Activated CD4-positive, alpha-beta T cell treated with anti-CD3 and anti-CD28 coated beads for 36 hours (primary cell): ENCODE measurements at regions of chr14 and their contacts with region 1.

Region 1: DNA sequence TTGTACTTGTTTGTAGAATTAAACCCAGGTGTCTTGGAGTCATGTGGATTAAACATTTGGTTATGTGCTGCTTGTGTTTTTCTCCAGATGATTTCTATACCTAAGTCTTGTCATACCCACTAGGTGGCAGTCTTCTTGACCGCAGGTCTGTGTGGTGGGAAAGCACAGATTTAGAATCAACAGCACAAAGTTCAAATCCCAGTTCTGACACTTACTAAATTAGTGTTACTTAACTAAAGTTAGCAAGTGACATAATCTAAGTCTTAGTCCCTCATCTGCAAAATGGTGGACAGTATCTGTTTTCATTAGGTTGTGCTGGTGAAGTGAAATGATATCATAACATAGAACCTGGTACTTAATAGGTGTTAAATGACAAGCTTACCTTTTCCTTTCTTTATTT is 151.0 kb upstream of the ARHGAP5 start:
- DNase-seq: peak; percentile 49
- ATAC-seq: no peak
- H3K4me3 Mint-ChIP-seq: no peak overlapping the region
- H3K27ac Mint-ChIP-seq: no peak overlapping the region
- H3K4me1 Mint-ChIP-seq: peaks cover 13% of the 10 kb centered on the region
- H3K27me3 Mint-ChIP-seq: no peaks in the 10 kb centered on the region

Region 2: DNA sequence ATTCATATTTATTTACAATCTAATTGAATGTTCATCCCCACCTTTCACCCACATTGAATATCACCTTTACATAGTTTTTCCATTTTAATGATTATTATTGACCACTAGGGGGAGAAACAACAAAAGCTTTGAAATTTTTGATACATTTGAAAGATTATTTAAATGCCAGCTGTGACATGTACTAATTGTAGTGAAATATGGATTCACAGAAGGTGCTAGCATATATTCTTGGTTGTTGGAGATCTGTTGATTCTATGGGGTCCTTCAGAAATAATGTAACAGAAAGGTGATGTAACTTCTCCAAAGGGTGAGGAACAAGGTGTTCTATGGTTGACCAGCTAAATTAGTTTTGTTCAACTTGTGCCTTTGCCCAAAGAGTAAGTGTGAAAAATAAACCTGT is 415.9 kb before region 1 on chr14:
- CTCF ChIA-PET with region 1: interaction called, 3 read pairs
- POLR2A ChIA-PET with region 1: no interaction called
- intact Hi-C with region 1: loop called in 1 of 2 experiments (anchors 10 kb)
- DNase-seq: no peak
- ATAC-seq: no peak
- H3K4me3 Mint-ChIP-seq: no peak overlapping the region
- H3K27ac Mint-ChIP-seq: no peak overlapping the region
- H3K4me1 Mint-ChIP-seq: no peaks in the 10 kb centered on the region
- H3K27me3 Mint-ChIP-seq: no peaks in the 10 kb centered on the region

Region 3: GRCh38 chr14:31561155-31561846 is 364.8 kb before region 1 on chr14 and contains the start of gene NUBPL:
- CTCF ChIA-PET with region 1: no interaction called
- POLR2A ChIA-PET with region 1: no interaction called
- intact Hi-C with region 1: loop called in 1 of 2 experiments (anchors 2 kb)
- DNase-seq: peak; percentile 98
- ATAC-seq: peak; percentile 96
- H3K4me3 Mint-ChIP-seq: peak within 1 kb of the TSS; percentile 92
- H3K27ac Mint-ChIP-seq: peak within 1 kb of the TSS; percentile 95
- H3K4me1 Mint-ChIP-seq: peaks cover 23% of the 10 kb centered on the region
- H3K27me3 Mint-ChIP-seq: peaks cover 6% of the 10 kb centered on the region
- total RNA-seq, gene NUBPL: 9.5 to 14.9 TPM

Region 4: DNA sequence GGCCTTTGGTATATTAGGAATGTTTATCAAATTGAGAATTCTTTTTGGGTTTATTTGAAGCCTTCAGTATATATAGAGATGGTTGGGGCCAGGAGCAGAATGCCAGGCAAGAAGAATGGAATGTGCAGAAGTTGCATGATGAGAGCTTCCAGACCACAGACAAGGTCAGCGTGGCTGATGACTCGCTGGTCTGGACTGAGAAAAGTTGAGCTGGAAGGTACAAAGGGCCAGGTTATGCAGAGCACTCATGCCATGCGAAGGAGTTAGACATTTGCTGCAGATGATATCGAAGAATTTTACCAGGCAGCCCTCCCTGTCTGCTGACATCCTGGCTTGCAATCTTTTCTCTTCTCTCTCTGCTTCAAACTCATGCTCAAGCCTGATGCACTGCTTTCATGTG is 45.2 kb before region 1 on chr14:
- CTCF ChIA-PET with region 1: no interaction called
- POLR2A ChIA-PET with region 1: no interaction called
- intact Hi-C with region 1: no loop called
- DNase-seq: no peak
- ATAC-seq: no peak
- H3K4me3 Mint-ChIP-seq: no peak overlapping the region
- H3K27ac Mint-ChIP-seq: no peak overlapping the region
- H3K4me1 Mint-ChIP-seq: no peaks in the 10 kb centered on the region
- H3K27me3 Mint-ChIP-seq: peaks cover 2% of the 10 kb centered on the region

Region 5: DNA sequence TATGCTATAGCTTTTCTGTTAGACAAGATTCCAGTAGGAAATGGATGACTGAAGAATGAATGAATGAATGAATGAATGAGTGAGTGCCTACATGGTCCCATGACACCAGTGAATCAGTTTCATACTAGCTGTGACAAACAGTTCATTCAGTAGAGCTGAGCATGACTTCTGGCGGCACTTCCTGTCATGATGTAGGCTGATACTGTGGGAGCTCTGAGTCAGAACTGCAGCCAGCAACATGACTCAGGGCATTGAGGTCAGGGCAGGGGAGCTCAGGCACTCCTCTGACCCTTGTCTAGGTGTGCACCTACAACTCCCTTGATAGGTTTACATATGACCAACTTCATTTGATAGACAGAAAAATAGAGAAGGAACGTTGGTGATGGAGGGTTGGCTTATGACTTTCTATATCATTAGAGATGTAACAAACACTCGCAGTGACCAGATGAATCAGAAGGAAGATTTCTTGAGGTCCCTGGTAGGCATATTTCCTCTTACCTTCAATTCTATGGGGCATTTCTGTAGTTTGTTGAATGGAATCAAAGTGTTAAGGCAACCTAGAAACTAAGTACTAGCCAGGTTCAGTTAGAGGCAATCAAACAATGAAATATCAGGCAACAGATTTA is 11.7 kb after region 1 on chr14:
- CTCF ChIA-PET with region 1: interaction called, 12 read pairs
- POLR2A ChIA-PET with region 1: interaction called, 4 read pairs
- intact Hi-C with region 1: loop called in 1 of 2 experiments (anchors 1 kb)
- DNase-seq: peak; percentile 87
- ATAC-seq: peak; percentile 100
- H3K4me3 Mint-ChIP-seq: no peak overlapping the region
- H3K27ac Mint-ChIP-seq: peak overlapping the region; percentile 28
- H3K4me1 Mint-ChIP-seq: peaks cover 17% of the 10 kb centered on the region
- H3K27me3 Mint-ChIP-seq: peaks cover 2% of the 10 kb centered on the region

Region 6: DNA sequence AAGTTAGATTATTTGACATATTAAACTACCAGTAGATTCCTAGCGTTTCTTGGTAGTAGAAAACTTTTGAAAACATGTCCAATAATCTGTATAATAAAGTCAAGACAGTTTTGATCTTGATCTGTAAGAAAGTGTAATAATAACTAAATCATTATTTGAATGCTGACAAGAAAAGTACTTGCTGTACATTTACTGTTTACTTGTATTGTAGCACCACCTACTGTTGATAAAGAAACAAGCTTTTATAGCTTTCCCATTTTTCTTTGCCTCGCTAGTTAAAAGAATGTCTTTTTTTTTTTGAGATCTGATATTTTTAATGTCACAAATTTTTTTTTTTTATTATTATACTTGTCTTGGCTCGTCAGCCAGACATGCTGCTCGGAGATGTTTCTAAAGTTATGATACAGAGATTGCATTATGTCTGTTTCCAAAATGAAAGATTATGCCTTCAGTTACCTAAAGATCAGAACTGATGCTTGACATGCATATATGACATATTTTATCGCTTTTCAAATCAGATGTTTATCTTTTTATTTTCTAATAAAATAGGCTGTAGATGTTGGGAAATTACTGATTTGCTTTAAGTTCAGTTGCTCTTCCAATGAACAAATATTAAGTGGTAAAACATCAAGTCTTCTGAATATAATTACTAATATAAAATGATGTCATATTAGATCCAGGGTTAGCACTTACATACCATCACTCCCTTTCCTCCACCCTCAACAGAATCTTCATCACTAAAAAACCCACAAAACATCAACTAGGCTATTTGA is 543.5 kb after region 1 on chr14:
- CTCF ChIA-PET with region 1: no interaction called
- POLR2A ChIA-PET with region 1: interaction called, 3 read pairs
- intact Hi-C with region 1: loop called (anchors 1 to 5 kb)
- DNase-seq: no peak
- ATAC-seq: no peak
- H3K4me3 Mint-ChIP-seq: no peak overlapping the region
- H3K27ac Mint-ChIP-seq: no peak overlapping the region
- H3K4me1 Mint-ChIP-seq: no peaks in the 10 kb centered on the region
- H3K27me3 Mint-ChIP-seq: peaks cover 9% of the 10 kb centered on the region

Region 7: DNA sequence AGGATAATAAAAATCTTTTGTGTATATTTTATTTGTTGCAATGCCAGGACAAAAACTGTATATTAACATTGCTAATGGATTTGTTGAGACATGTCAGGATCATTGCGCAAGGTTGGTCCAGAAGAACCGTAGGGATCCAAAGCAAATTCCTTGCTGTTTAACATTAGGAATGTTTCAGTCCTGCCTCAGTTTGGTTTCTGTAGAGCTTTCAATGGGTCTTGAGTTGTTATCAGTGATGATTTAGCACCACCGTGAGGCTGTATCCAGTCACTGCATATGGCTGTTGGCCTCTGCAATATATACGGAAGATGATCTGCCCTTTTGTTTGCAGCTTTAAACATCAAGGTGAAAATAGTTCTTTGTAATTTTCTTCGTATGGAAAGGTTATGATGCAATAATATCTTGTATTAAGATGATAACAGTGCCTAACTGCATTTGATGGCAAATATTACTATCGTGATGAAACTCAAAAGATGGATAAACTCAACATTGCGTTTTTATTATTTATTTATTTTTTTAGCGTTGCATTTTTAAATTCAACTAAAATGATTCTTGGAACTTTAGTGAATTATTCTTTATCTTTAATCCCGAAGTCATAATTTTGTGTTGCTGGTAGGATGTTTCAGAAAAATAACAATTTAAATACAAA is 634.2 kb after region 1 on chr14:
- CTCF ChIA-PET with region 1: interaction called, 4 read pairs
- POLR2A ChIA-PET with region 1: no interaction called
- intact Hi-C with region 1: loop called in 1 of 2 experiments (anchors 10 kb)
- DNase-seq: peak; percentile 52
- ATAC-seq: no peak
- H3K4me3 Mint-ChIP-seq: no peak overlapping the region
- H3K27ac Mint-ChIP-seq: no peak overlapping the region
- H3K4me1 Mint-ChIP-seq: peaks cover 12% of the 10 kb centered on the region
- H3K27me3 Mint-ChIP-seq: no peaks in the 10 kb centered on the region